CD4-positive, alpha-beta memory T cell (primary cell): ENCODE measurements at regions of chr12 and their contacts with region 1.

Region 1: GRCh38 chr12:48988030-48988649 is 10.0 kb downstream of the WNT1 start:
- DNase-seq: peak; percentile 64 to 74 (median 67)
- H3K4me3 ChIP-seq: no peak overlapping the region
- H3K4me3 Mint-ChIP-seq: peak overlapping the region in 2 of 8 donors; percentile 7 to 35
- H3K27ac ChIP-seq: no peak overlapping the region
- H3K27ac Mint-ChIP-seq: peak overlapping the region in 3 of 7 donors; percentile 21 to 65 (median 45)
- H3K4me1 ChIP-seq: peaks cover 6% of the 10 kb centered on the region
- H3K4me1 Mint-ChIP-seq: peaks cover 10 to 15% (median 11%) of the 10 kb centered on the region in 4 donors
- H3K27me3 ChIP-seq: peaks cover 4% of the 10 kb centered on the region
- H3K27me3 Mint-ChIP-seq: peaks cover 21 to 22% of the 10 kb centered on the region in 2 donors

Region 2: DNA sequence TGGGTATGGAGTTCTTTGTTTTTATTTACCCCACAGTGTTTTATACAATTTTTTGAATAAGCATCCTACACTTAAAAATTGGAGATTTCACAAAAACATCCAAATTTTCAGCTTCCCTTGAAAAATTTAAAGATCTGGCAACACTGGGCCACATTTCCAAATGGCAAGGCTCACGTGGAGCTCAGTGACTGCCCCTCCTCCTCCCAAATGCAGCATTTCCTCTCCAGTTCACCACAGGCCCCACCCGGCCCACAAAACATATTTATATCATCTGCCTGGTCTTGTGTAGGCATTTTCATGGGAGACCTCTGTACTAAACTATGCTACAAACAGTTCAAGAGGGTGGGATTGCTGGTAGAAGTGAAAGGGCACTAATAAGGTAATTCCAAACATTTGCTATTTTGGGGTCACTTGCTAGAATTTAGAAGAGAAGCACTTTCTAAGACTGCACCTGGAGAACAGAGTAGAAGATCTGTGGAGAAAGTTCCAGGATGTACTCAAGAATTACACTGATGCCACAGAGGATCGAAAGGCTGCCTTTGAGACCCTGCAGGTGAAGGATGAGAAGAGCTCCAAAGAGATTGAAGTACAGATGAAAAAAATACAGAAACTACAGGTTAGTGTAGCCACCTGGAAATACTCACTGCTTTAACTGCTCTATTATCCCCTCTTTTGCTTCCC is 70.1 kb before region 1 on chr12:
- CTCF ChIA-PET with region 1: interaction called, 10 read pairs
- POLR2A ChIA-PET with region 1: interaction called, 3 read pairs
- intact Hi-C with region 1: no loop called
- DNase-seq: peak; percentile 55 to 66 (median 61)
- H3K4me3 ChIP-seq: peak overlapping the region; percentile 44 to 72
- H3K4me3 Mint-ChIP-seq: peak overlapping the region; percentile 91 to 99 (median 94)
- H3K27ac ChIP-seq: peak overlapping the region; percentile 65
- H3K27ac Mint-ChIP-seq: peak overlapping the region; percentile 72 to 97 (median 94)
- H3K4me1 ChIP-seq: peaks cover 50% of the 10 kb centered on the region
- H3K4me1 Mint-ChIP-seq: peaks cover 27 to 54% (median 39%) of the 10 kb centered on the region in 4 donors
- H3K27me3 ChIP-seq: no peaks in the 10 kb centered on the region
- H3K27me3 Mint-ChIP-seq: no peaks in the 10 kb centered on the region

Region 3: DNA sequence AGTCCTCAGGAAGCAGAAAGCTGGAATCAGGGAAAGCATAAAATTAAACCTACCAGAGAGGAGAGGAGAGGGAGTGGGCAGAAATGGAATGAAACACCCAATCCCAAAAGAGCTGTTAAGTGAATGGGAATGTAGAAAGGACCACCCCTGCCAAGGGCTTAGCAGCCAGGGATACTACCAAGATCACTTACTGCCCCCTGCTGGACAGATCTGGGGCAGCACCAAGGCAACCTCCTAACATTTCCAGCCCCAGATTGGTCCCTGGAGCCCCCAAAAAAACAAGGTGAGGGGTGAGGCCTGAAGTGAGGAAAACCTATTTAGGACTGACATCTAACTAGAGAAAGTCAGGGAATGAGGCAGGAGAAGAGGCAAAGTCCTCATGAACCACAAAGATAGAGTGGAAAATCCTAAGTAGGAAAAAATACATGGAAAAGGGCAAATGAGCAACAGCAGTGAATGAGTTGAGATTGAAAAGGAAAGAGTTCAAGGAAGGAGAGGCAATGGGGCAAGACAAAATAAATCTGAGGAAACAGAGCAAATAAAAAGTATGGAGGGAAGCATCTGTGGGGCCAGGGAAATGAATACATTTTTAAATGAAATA is 51.7 kb before region 1 on chr12:
- CTCF ChIA-PET with region 1: interaction called, 27 read pairs
- POLR2A ChIA-PET with region 1: no interaction called
- intact Hi-C with region 1: loop called (anchors 1 kb)
- DNase-seq: peak; percentile 74 to 82 (median 78)
- H3K4me3 ChIP-seq: no peak overlapping the region
- H3K4me3 Mint-ChIP-seq: no peak overlapping the region
- H3K27ac ChIP-seq: peak overlapping the region; percentile 71
- H3K27ac Mint-ChIP-seq: peak overlapping the region; percentile 86 to 97 (median 95)
- H3K4me1 ChIP-seq: peaks cover 45% of the 10 kb centered on the region
- H3K4me1 Mint-ChIP-seq: peaks cover 31 to 50% (median 38%) of the 10 kb centered on the region in 4 donors
- H3K27me3 ChIP-seq: no peaks in the 10 kb centered on the region
- H3K27me3 Mint-ChIP-seq: no peaks in the 10 kb centered on the region

Region 4: GRCh38 chr12:48969833-48970701 is 18.1 kb before region 1 on chr12:
- CTCF ChIA-PET with region 1: interaction called, 244 read pairs
- POLR2A ChIA-PET with region 1: interaction called, 6 read pairs
- intact Hi-C with region 1: loop called (anchors 2 kb)
- DNase-seq: peak in 3 of 5 donors; percentile 37 to 47 (median 38)
- H3K4me3 ChIP-seq: peak overlapping the region in 1 of 2 donors; percentile 41
- H3K4me3 Mint-ChIP-seq: peak overlapping the region; percentile 12 to 87 (median 64)
- H3K27ac ChIP-seq: no peak overlapping the region
- H3K27ac Mint-ChIP-seq: peak overlapping the region in 2 of 7 donors; percentile 44 to 51
- H3K4me1 ChIP-seq: peaks cover 39% of the 10 kb centered on the region
- H3K4me1 Mint-ChIP-seq: peaks cover 13 to 39% (median 26%) of the 10 kb centered on the region in 4 donors
- H3K27me3 ChIP-seq: peaks cover 26% of the 10 kb centered on the region
- H3K27me3 Mint-ChIP-seq: peaks cover 27 to 30% of the 10 kb centered on the region in 2 donors

Region 5: DNA sequence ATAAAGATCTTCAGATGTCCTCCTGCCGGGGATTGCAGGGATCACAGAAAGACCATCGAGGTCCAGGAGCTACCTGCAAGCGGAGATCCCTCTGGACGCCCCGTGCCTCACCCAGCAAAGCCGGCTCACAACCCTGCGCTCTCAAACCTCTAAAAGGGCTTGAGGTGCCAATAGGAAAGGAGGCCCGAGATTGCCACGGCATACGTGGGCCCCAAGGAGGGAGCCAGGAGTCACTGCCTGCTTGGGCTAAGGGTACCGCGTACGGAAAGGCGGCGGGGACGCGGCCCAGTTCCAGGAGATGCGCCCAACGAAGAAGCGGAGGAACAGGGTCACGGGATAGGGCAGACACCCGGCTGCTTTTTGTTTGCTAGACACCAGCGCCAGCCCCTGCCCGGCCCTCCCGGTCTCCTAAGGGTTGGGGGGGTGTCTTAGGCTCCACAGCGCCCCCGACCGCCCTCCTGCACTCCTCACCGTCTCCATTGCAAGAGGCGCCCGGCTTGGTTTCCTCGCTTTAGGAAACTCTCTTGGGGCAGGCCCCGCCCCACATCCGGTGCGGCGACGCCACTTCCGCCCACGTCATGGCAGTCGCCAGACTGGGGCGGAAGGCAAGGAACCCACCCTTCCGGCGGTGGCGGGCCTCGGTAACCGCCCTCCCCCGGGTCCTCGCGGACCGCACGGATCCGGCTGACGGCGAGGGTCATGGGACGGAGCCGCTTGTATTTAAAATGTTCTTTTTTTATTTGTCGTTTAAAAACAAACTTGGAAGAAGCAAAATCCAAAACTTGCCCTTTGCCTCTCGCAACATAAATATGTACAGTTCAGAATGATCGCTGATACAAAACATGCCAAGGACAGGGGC is 30.4 kb after region 1 on chr12 and contains the start of gene PRKAG1:
- CTCF ChIA-PET with region 1: interaction called, 13 read pairs
- POLR2A ChIA-PET with region 1: interaction called, 4 read pairs
- intact Hi-C with region 1: no loop called
- DNase-seq: peak; percentile 97 to 98 (median 98)
- H3K4me3 ChIP-seq: peak within 1 kb of the TSS; percentile 94 to 96
- H3K4me3 Mint-ChIP-seq: peak within 1 kb of the TSS; percentile 87 to 99 (median 94)
- H3K27ac ChIP-seq: peak within 1 kb of the TSS; percentile 95
- H3K27ac Mint-ChIP-seq: peak within 1 kb of the TSS; percentile 95 to 100 (median 99)
- H3K4me1 ChIP-seq: peaks cover 24% of the 10 kb centered on the region
- H3K4me1 Mint-ChIP-seq: peaks cover 18 to 51% (median 37%) of the 10 kb centered on the region in 4 donors
- H3K27me3 ChIP-seq: no peaks in the 10 kb centered on the region
- H3K27me3 Mint-ChIP-seq: no peaks in the 10 kb centered on the region
- total RNA-seq, gene PRKAG1: 48.9 to 53.7 TPM

Region 6: GRCh38 chr12:49079793-49080192 is 91.7 kb after region 1 on chr12:
- CTCF ChIA-PET with region 1: no interaction called
- POLR2A ChIA-PET with region 1: no interaction called
- intact Hi-C with region 1: no loop called
- DNase-seq: no peak
- H3K4me3 ChIP-seq: no peak overlapping the region
- H3K4me3 Mint-ChIP-seq: no peak overlapping the region
- H3K27ac ChIP-seq: no peak overlapping the region
- H3K27ac Mint-ChIP-seq: peak overlapping the region in 1 of 7 donors; percentile 44
- H3K4me1 ChIP-seq: no peaks in the 10 kb centered on the region
- H3K4me1 Mint-ChIP-seq: no peaks in the 10 kb centered on the region
- H3K27me3 ChIP-seq: no peaks in the 10 kb centered on the region
- H3K27me3 Mint-ChIP-seq: peaks cover 1 to 5% of the 10 kb centered on the region in 2 donors